A673 (cell line): ENCODE measurements at regions of chr20 and their contacts with region 1.

Region 1: GRCh38 chr20:50690634-50691572 is at the start of gene RIPOR3:
- DNase-seq: peak; percentile 65
- H3K4me3 ChIP-seq: peak within 1 kb of the TSS; percentile 51
- H3K27ac ChIP-seq: peak within 1 kb of the TSS; percentile 82
- H3K4me1 ChIP-seq: peaks cover 40% of the 10 kb centered on the region
- H3K27me3 ChIP-seq: no peaks in the 10 kb centered on the region
- CTCF ChIP-seq: no peak
- total RNA-seq, gene RIPOR3: 19.1 and 21.6 TPM in 2 replicates

Region 2: DNA sequence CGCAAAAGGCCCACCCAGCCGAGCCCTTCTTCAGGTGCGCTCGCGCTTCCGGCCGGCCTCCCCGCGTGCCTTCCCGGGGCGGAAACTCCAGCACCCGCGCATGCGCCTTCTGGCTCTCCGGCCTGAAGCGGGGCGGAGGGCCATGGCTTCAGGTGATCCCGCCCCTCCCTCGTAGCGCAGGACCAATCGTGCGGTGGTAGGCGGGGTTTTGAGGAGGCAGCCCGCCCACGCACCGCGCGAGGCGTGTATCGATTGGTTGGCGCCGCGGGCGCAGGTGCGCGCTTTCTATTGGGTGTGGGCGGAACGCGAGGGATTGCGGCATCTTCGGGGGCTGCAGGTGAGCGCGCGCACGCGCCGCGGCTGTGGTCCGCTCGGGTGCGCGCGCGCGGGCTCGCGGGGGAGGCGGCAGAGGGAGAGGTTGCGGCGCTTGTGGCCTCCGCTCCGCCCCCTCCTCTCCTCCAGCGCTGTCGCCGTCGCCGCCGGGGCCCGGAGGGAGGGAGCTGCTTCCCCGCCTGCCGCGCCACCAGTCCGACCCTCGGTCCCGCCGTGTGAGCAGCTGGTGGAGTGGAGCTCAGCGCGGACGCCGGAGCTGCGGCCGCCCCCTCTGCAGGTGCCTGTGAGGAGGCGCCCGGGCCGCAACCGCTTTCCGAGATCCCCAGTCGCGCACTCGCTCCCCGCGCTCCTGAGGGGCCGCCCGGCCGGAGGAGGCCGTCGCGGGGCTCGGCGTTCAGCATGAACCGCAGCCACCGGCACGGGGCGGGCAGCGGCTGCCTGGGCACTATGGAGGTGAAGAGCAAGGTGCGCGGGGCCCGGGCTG is 40.4 kb after region 1 on chr20 and contains the start of gene PARD6B:
- CTCF ChIA-PET with region 1: no interaction called
- POLR2A ChIA-PET with region 1: no interaction called
- intact Hi-C with region 1: loop called (anchors 2 kb)
- DNase-seq: peak; percentile 99
- H3K4me3 ChIP-seq: peak within 1 kb of the TSS; percentile 94
- H3K27ac ChIP-seq: peak within 1 kb of the TSS; percentile 90
- H3K4me1 ChIP-seq: peaks cover 29% of the 10 kb centered on the region
- H3K27me3 ChIP-seq: no peaks in the 10 kb centered on the region
- CTCF ChIP-seq: no peak
- total RNA-seq, gene PARD6B: 24.7 and 28.1 TPM in 2 replicates

Region 3: GRCh38 chr20:50750145-50750671 is 59.3 kb after region 1 on chr20:
- CTCF ChIA-PET with region 1: interaction called, 25 read pairs
- POLR2A ChIA-PET with region 1: no interaction called
- intact Hi-C with region 1: no loop called
- DNase-seq: no peak
- H3K4me3 ChIP-seq: no peak overlapping the region
- H3K27ac ChIP-seq: peak overlapping the region; percentile 17
- H3K4me1 ChIP-seq: peaks cover 27% of the 10 kb centered on the region
- H3K27me3 ChIP-seq: no peaks in the 10 kb centered on the region
- CTCF ChIP-seq: no peak